Head of caudate nucleus (tissue), 42 donors: ENCODE measurements at regions of chr9 and their contacts with region 1.

Region 1: DNA sequence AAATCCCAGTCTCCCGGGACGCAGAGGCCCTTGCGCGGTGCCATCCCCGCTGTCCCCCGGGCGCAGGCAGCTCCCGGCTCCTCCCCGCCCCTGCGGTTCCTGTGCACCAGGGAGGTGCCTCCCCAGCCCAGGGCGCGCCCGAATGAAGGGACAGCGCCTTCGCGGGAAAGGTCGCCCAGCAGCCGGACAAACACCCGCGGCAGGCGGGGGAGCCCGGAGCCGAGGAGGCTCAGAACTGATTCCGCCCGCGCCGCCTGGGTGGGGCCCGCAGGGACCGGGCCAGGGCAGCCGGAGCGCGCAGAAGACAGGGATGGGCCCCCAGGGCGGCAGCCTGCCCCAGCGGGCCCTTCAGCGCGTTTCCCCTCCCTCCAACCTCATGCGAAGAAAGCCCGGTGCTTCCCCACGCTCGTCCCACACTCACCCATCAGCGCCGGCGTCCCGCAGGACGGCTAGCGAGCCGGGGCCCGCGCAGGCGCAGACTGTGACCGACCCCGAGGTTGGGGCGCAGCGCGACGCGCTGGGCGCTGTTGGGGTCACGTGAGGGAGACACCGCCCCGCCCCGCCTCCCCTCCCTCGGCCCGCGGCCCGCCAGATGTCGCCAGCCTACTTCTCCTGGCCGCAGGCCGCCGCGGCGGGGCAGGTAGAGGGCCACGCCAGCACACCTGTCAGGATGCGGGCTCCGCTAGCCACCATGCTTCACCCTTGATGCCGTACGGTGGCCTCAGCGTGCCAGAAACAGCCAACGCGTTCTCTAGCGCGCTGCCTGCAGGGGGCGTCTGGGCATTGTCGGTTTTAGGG is at the start of gene SLC25A51:
- DNase-seq: peak; percentile 87 to 97 (median 94)

Region 2: DNA sequence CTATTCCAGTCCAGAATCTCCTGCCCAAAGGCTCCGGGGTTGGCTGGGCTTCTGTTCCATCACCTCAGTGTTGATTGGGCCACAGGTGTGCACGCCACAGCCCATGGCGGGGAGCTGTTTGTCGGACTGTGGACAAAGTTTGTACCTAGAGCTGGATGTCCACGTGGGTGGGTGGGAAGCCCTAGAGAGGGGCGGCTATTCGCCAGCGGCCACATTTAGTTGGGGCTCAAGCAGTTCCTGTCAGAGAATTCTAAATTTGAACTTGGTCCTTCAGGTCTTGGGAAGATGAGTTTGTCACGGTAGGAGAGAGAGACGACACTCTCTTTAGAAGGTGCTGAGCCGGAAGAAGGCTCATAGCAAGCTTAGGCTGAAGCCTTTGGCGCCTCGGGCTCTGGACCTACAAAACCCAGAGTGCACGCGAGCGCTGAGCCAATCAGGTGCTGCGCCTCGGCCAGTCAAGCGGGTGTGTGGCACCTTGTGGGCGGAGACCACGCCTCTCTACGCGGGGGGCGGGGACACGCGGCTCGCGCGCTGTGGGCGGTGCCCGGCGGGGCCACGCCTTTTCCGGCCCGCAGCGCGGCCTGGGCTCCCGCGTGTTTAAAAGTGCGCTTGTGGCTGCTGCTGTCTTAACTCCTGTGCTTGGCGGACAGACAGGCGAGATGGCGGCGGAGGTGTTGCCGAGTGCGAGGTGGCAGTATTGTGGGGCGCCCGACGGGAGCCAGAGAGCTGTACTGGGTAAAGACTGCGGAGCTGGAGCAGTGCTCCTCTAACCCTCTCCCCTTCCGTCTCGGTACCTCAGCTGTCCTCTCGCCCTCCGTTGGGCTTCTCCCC is 418.2 kb before region 1 on chr9 and contains the start of gene POLR1E:
- intact Hi-C with region 1: loop called (anchors 10 kb)
- DNase-seq: peak; percentile 87 to 98 (median 94)

Region 3: DNA sequence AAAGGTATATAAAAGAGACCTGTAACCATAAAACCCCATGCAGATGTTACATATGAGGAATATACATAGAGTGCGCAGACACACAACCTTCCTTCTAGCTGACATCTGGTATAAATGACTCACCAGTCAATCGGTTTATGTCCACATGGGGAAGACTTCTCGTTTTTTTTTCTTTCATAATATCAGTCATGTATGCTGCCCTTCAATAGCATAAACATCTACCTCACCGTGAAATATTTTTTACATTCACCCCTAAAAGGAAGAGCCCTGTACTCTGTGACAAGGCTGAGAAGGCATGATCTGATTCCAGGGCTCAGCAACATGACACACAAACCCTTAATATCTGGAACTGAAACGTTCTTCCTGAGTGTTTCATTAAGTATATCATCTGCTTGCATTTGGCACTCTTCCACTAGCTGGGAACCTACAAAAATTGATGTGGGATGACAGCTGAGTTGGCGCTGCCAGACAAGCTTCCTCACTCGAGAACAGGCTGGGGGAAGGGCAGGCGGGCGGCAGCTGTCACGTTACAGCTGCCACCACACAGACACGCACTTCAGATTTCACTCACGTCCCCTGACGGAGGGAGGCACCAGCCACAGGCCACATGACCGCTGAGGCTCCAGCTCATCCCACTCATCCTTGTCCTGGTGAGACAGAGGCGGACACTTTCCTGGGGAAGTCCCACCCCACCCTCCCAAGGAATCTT is 90.9 kb after region 1 on chr9:
- intact Hi-C with region 1: no loop called
- DNase-seq: peak; percentile 89 to 98 (median 96)

Region 4: GRCh38 chr9:38068866-38069629 is 165.2 kb after region 1 on chr9 and contains the start of gene SHB:
- intact Hi-C with region 1: no loop called
- DNase-seq: peak; percentile 39 to 94 (median 86)

Region 5: DNA sequence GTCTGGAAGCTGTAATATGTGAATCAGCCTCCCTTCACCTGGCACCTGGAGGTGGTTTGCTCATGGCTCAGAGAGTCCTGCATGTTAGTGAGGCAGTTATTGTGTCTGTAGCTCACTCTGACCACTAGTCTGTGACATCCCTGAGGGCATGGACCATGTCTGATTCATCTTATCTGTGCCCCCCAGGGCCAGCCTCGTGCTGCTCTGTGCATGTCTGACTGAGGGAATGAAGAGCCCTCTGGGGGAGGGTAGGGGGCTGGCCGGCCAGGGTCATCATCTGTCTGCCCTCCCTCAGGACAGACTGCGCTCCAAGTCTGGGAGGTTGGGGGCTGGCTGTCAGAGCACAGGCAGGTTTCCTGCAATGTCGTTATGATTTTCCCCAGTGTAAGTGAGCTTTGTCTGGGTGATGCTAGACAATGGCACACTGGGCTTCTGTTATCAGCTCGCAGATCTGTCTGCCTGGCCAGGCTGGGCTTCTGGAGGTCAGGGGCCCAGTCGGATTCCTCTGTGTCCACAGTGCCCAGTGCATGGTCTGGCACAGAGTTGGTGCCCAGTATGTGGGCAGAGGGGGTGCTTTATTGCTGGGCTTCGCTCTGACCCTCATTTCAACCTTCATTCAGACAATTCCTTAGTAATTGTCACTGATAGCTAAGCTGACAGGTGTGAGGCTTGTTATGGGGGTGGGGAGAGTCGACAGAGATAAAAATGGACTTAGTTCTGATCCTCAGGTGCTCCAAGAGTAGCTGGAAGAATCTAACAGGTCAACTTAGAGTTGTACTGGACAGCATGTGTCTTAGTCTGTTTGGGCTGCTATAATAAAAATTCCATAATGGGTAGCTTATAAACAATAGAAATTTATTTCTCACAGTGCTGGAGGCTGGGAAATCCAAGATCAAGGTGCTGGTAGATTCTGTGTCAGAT is 250.9 kb after region 1 on chr9:
- intact Hi-C with region 1: loop called (anchors 10 kb)
- DNase-seq: no peak